IMR-90 (cell line): ENCODE measurements at regions of chr2 and their contacts with region 1.

Region 1: GRCh38 chr2:226721541-226721940 is 78.1 kb downstream of the IRS1 start:
- DNase-seq: peak; percentile 36
- ATAC-seq: 0 out of 2 replicates have a peak, but pooled peaks have one; percentile 19
- H3K4me3 ChIP-seq: no peak overlapping the region
- H3K27ac ChIP-seq: no peak overlapping the region
- H3K4me1 ChIP-seq: peaks cover 12% of the 10 kb centered on the region
- H3K27me3 ChIP-seq: no peaks in the 10 kb centered on the region
- CTCF ChIP-seq: no peak
- POLR2A ChIP-seq: no peak
- RAD21 ChIP-seq: no peak

Region 2: GRCh38 chr2:226215902-226216503 is 505.5 kb before region 1 on chr2:
- CTCF ChIA-PET with region 1: no interaction called
- POLR2A ChIA-PET with region 1: no interaction called
- dilution Hi-C with region 1: no loop called
- in situ Hi-C with region 1: no loop called
- intact Hi-C with region 1: loop called (anchors 10 kb)
- DNase-seq: peak; percentile 54
- ATAC-seq: peak; percentile 64
- H3K4me3 ChIP-seq: no peak overlapping the region
- H3K27ac ChIP-seq: no peak overlapping the region
- H3K4me1 ChIP-seq: peaks cover 8% of the 10 kb centered on the region
- H3K27me3 ChIP-seq: no peaks in the 10 kb centered on the region
- CTCF ChIP-seq: peak; percentile 68
- POLR2A ChIP-seq: no peak
- RAD21 ChIP-seq: peak; percentile 74